Activated B cell treated with CpG ODN at 0.5 μM for 24 hours (primary cell): ENCODE measurements at regions of chr12 and their contacts with region 1.

Region 1: DNA sequence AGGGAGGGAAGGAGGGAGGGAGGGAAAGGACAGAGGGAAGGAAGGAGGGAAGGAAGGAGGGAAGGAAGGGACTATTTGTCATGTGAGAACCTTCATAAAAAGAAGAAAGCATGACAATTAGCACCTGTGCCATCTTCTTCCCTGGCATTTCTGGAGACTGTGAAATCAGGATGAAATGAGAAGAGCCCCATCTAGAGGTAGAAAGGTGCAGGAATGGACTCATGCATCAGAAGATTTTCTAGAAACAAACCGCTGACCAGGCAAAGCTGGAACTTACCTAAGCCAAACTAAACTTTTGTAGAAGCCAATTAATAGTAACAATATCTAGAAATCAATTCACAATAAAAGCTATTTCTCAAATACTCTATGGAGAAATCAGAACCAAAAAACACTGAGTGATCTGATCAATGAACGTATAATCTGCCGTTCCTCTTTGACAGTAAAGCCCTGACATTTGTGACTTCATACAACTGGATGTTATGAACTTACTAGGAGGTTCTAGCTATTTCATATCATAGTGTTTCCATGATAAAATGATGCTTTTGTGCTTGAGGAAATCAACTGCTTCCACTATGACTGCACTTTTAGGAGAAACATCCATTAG is 24.4 kb upstream of the CRACR2A start:
- DNase-seq: no peak
- ATAC-seq: no peak
- H3K4me3 Mint-ChIP-seq: no peak overlapping the region
- H3K27ac Mint-ChIP-seq: no peak overlapping the region
- H3K4me1 Mint-ChIP-seq: no peaks in the 10 kb centered on the region
- H3K27me3 Mint-ChIP-seq: no peaks in the 10 kb centered on the region
- CTCF ChIP-seq: no peak

Region 2: GRCh38 chr12:3299929-3300832 is 477.1 kb before region 1 on chr12:
- CTCF ChIA-PET with region 1: interaction called, 18 read pairs
- POLR2A ChIA-PET with region 1: no interaction called
- intact Hi-C with region 1: loop called (anchors 1 kb)
- DNase-seq: peak; percentile 63
- ATAC-seq: peak; percentile 85
- H3K4me3 Mint-ChIP-seq: peak overlapping the region; percentile 74
- H3K27ac Mint-ChIP-seq: peak overlapping the region; percentile 73
- H3K4me1 Mint-ChIP-seq: peaks cover 11% of the 10 kb centered on the region
- H3K27me3 Mint-ChIP-seq: peaks cover 25% of the 10 kb centered on the region
- CTCF ChIP-seq: peak; percentile 37

Region 3: DNA sequence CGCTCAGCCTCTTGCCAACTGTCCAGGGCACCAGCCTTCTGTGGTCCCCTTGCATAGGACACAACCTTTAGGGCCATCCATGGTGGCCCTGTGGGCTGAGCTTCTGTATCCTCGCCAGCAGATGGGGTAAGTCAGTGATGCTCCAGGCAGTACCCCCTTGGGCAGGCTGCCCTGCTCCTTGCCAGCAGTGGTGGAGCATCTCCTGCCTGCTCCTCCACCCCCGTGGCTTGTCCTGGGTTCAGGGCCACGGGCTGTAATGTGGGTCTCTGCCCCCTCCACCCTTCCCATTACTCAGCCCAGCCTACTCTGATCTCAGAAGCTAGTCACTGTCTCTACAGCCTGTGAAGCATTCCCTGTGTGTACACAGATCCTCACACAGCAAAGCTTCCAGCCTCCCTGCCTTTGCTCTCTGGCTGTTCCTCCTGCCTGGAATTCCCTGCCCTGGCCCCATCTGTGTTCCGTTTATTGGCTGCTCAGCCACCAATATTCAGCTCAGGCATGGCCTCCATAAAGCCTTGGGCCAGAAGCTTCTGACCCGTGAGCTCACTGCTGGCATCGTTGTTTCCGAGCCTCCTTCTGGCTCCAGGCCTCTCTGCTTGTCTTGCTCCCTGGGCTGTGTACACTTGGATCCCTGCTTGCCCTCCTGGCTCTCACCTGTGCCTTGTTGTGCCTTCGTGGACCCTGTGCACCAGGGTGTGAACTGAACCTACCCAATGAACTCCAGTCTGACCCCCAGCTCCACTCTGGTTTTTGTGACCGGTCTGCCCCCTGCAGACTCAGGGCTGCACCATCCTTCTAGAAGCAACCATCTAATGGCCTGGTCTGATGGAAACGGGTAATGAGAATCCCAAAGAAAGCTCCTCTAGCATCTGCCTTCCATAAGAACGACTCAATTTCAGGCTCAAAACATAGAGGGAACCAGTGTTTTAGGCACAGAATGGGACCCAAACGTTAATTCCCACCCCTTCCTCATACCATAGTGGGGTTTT is 463.3 kb before region 1 on chr12:
- CTCF ChIA-PET with region 1: interaction called, 12 read pairs
- POLR2A ChIA-PET with region 1: no interaction called
- intact Hi-C with region 1: loop called (anchors 1 kb)
- DNase-seq: no peak
- ATAC-seq: peak; percentile 58
- H3K4me3 Mint-ChIP-seq: no peak overlapping the region
- H3K27ac Mint-ChIP-seq: no peak overlapping the region
- H3K4me1 Mint-ChIP-seq: no peaks in the 10 kb centered on the region
- H3K27me3 Mint-ChIP-seq: peaks cover 8% of the 10 kb centered on the region
- CTCF ChIP-seq: no peak

Region 4: GRCh38 chr12:3658327-3659163 is 118.8 kb before region 1 on chr12:
- CTCF ChIA-PET with region 1: no interaction called
- POLR2A ChIA-PET with region 1: no interaction called
- intact Hi-C with region 1: loop called (anchors 1 kb)
- DNase-seq: no peak
- ATAC-seq: no peak
- H3K4me3 Mint-ChIP-seq: no peak overlapping the region
- H3K27ac Mint-ChIP-seq: no peak overlapping the region
- H3K4me1 Mint-ChIP-seq: no peaks in the 10 kb centered on the region
- H3K27me3 Mint-ChIP-seq: no peaks in the 10 kb centered on the region
- CTCF ChIP-seq: no peak

Region 5: GRCh38 chr12:3683670-3684069 is 93.6 kb before region 1 on chr12:
- CTCF ChIA-PET with region 1: no interaction called
- POLR2A ChIA-PET with region 1: no interaction called
- intact Hi-C with region 1: no loop called
- DNase-seq: no peak
- ATAC-seq: no peak
- H3K4me3 Mint-ChIP-seq: no peak overlapping the region
- H3K27ac Mint-ChIP-seq: no peak overlapping the region
- H3K4me1 Mint-ChIP-seq: no peaks in the 10 kb centered on the region
- H3K27me3 Mint-ChIP-seq: no peaks in the 10 kb centered on the region
- CTCF ChIP-seq: no peak

Region 6: DNA sequence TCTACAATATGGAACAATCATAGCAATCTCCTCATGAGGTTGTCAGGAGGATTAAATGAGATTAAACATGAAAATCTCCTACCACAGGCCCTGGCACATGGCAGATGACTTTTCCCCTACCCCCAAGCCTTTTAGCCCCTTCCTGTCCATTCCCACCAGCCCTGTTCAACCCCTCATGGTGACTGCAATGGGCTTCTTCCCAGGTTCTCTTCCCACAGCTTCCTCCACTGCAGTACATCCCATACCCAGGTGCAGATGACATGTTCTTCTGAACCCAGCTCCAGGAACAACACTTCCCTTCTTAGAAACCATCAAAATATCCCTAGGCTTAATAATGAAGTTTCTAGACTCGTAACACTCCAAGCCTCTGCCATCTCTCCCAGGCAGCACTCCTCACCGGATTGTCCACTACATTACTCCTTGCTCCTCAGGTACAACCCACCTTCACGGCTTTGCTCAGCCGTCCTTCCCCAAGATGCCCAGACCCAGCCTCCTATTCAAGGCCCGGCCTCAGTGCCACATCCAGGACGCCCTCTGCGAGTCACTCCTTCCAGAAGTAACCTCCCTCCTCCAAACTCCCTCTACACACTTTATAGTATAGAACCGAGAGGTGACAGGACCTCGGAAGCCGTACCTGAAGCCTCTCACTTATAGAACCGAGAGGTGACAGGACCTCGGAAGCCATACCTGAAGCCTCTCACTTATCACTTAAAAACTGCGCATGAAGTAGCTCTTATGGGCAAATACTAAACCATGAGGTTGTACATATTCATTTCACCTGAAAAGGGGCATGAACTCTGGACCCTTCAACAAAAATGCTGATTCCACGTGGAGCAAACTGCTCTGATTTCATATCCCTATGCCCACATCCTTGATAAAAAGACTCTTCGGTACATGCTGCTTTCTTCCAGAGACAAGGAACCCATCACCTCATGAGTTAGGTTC is 25.9 kb before region 1 on chr12:
- CTCF ChIA-PET with region 1: no interaction called
- POLR2A ChIA-PET with region 1: no interaction called
- intact Hi-C with region 1: no loop called
- DNase-seq: no peak
- ATAC-seq: no peak
- H3K4me3 Mint-ChIP-seq: peak overlapping the region; percentile 88
- H3K27ac Mint-ChIP-seq: peak overlapping the region; percentile 90
- H3K4me1 Mint-ChIP-seq: peaks cover 25% of the 10 kb centered on the region
- H3K27me3 Mint-ChIP-seq: no peaks in the 10 kb centered on the region
- CTCF ChIP-seq: no peak